Mammary epithelial cell (primary cell): ENCODE measurements at regions of chr1 and their contacts with region 1.

Region 1: GRCh38 chr1:11967028-11967547 is 13.2 kb upstream of the MFN2 start:
- DNase-seq: peak; percentile 48
- H3K4me3 ChIP-seq: no peak overlapping the region
- H3K27ac ChIP-seq: no peak overlapping the region
- H3K4me1 ChIP-seq: no peaks in the 10 kb centered on the region
- H3K27me3 ChIP-seq: no peaks in the 10 kb centered on the region
- CTCF ChIP-seq: peak; percentile 67 to 86

Region 2: DNA sequence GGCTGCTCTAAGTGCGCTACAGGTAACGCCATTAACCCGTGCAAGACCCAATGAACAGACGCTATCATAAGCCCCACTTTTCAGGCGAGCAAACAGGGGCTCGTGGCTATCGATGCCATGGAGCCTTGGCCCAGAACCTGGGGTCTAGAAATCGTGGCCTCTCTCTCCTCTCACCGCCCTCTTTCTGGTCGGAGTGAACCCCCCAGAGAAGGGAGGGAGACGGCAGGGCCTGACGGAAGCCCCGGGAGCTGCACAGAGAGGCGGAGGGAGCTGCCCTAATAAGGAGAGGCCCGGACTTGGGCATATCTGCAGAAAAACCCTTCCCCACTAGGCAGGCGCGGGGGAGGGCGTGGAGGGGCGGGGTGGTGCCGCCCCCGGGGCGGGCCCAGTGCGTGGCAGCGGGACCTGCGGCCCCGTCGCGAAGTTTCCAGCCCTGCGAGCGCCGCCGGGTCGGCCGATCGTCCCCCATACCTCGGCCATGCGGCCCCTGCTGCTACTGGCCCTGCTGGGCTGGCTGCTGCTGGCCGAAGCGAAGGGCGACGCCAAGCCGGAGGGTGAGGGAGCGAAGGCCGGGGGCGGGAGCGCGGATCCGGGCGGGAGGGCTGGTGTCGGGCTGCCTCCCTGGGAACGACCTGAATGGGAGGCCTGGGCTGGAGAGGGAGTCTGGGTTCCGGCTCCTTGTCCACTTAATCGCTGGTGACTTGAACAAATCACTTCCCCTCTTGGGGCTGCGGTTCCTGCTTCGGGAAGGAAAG is 32.6 kb before region 1 on chr1 and contains the start of gene PLOD1:
- CTCF ChIA-PET with region 1: no interaction called
- dilution Hi-C with region 1: no loop called
- in situ Hi-C with region 1: no loop called
- intact Hi-C with region 1: loop called (anchors 5 kb)
- DNase-seq: peak; percentile 82
- H3K4me3 ChIP-seq: peak within 1 kb of the TSS; percentile 74 to 85 (median 75)
- H3K27ac ChIP-seq: peak within 1 kb of the TSS; percentile 4
- H3K4me1 ChIP-seq: peaks cover 29% of the 10 kb centered on the region
- H3K27me3 ChIP-seq: no peaks in the 10 kb centered on the region
- CTCF ChIP-seq: no peak
- total RNA-seq, gene PLOD1: 107 to 197 TPM

Region 3: GRCh38 chr1:12031039-12031980 is 64.2 kb after region 1 on chr1:
- CTCF ChIA-PET with region 1: interaction called, 3 read pairs
- dilution Hi-C with region 1: no loop called
- in situ Hi-C with region 1: no loop called
- intact Hi-C with region 1: loop called (anchors 1 kb)
- DNase-seq: peak; percentile 12
- H3K4me3 ChIP-seq: no peak overlapping the region
- H3K27ac ChIP-seq: no peak overlapping the region
- H3K4me1 ChIP-seq: no peaks in the 10 kb centered on the region
- H3K27me3 ChIP-seq: no peaks in the 10 kb centered on the region
- CTCF ChIP-seq: peak; percentile 32 to 52

Region 4: GRCh38 chr1:12255918-12256317 is 288.8 kb after region 1 on chr1:
- CTCF ChIA-PET with region 1: no interaction called
- dilution Hi-C with region 1: no loop called
- in situ Hi-C with region 1: no loop called
- intact Hi-C with region 1: no loop called
- DNase-seq: no peak
- H3K4me3 ChIP-seq: no peak overlapping the region
- H3K27ac ChIP-seq: no peak overlapping the region
- H3K4me1 ChIP-seq: no peaks in the 10 kb centered on the region
- H3K27me3 ChIP-seq: no peaks in the 10 kb centered on the region
- CTCF ChIP-seq: no peak

Region 5: GRCh38 chr1:12333036-12333785 is 366.1 kb after region 1 on chr1:
- CTCF ChIA-PET with region 1: no interaction called
- dilution Hi-C with region 1: no loop called
- in situ Hi-C with region 1: no loop called
- intact Hi-C with region 1: no loop called
- DNase-seq: no peak
- H3K4me3 ChIP-seq: no peak overlapping the region
- H3K27ac ChIP-seq: no peak overlapping the region
- H3K4me1 ChIP-seq: no peaks in the 10 kb centered on the region
- H3K27me3 ChIP-seq: no peaks in the 10 kb centered on the region
- CTCF ChIP-seq: no peak